CD4-positive, alpha-beta T cell (primary cell): ENCODE measurements at regions of chr9 and their contacts with region 1.

Region 1: GRCh38 chr9:92293452-92294296 is at the start of gene IARS1:
- DNase-seq: peak; percentile 97 to 100 (median 99)
- ATAC-seq: peak; percentile 93
- H3K4me3 ChIP-seq: peak within 1 kb of the TSS; percentile 70
- H3K4me3 Mint-ChIP-seq: peak within 1 kb of the TSS; percentile 98
- H3K27ac ChIP-seq: peak within 1 kb of the TSS; percentile 73 to 74
- H3K27ac Mint-ChIP-seq: peak within 1 kb of the TSS; percentile 97
- H3K4me1 ChIP-seq: peaks cover 25% of the 10 kb centered on the region
- H3K4me1 Mint-ChIP-seq: peaks cover 69% of the 10 kb centered on the region
- H3K27me3 ChIP-seq: no peaks in the 10 kb centered on the region
- H3K27me3 Mint-ChIP-seq: no peaks in the 10 kb centered on the region
- CTCF ChIP-seq: no peak
- total RNA-seq, gene IARS1: 49.8 to 56.8 TPM

Region 2: DNA sequence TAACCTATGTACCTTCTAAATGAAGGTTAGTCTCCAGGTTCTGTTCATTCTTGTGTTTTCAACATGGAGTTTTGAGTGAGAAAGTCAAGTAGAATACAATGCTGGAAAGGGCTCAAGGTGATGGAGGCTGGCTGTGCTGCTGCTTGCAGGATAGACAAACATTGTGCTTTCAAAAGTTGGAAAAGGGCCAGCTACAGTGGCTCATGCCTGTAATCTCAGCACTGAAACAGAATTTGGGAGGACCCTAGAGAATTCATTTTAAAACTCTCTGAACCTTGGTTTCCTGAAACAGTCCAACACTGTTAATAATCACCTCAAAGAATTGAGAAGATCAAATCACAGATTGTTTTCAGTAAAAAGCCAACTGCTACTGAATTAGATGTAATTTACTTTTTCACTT is 15.2 kb after region 1 on chr9:
- CTCF ChIA-PET with region 1: no interaction called
- POLR2A ChIA-PET with region 1: no interaction called
- intact Hi-C with region 1: no loop called
- DNase-seq: no peak
- ATAC-seq: no peak
- H3K4me3 ChIP-seq: no peak overlapping the region
- H3K4me3 Mint-ChIP-seq: no peak overlapping the region
- H3K27ac ChIP-seq: no peak overlapping the region
- H3K27ac Mint-ChIP-seq: no peak overlapping the region
- H3K4me1 ChIP-seq: no peaks in the 10 kb centered on the region
- H3K4me1 Mint-ChIP-seq: peaks cover 23% of the 10 kb centered on the region
- H3K27me3 ChIP-seq: no peaks in the 10 kb centered on the region
- H3K27me3 Mint-ChIP-seq: no peaks in the 10 kb centered on the region
- CTCF ChIP-seq: no peak

Region 3: GRCh38 chr9:92463984-92464383 is 170.3 kb after region 1 on chr9:
- CTCF ChIA-PET with region 1: no interaction called
- POLR2A ChIA-PET with region 1: no interaction called
- intact Hi-C with region 1: no loop called
- DNase-seq: no peak
- ATAC-seq: no peak
- H3K4me3 ChIP-seq: no peak overlapping the region
- H3K4me3 Mint-ChIP-seq: no peak overlapping the region
- H3K27ac ChIP-seq: no peak overlapping the region
- H3K27ac Mint-ChIP-seq: no peak overlapping the region
- H3K4me1 ChIP-seq: no peaks in the 10 kb centered on the region
- H3K4me1 Mint-ChIP-seq: no peaks in the 10 kb centered on the region
- H3K27me3 ChIP-seq: no peaks in the 10 kb centered on the region
- H3K27me3 Mint-ChIP-seq: no peaks in the 10 kb centered on the region
- CTCF ChIP-seq: no peak

Region 4: GRCh38 chr9:93950619-93951601 is 1657.2 kb after region 1 on chr9:
- CTCF ChIA-PET with region 1: no interaction called
- POLR2A ChIA-PET with region 1: no interaction called
- intact Hi-C with region 1: no loop called
- DNase-seq: peak in 1 of 14 experiments; percentile 9
- ATAC-seq: no peak
- H3K4me3 ChIP-seq: peak overlapping the region; percentile 59
- H3K4me3 Mint-ChIP-seq: peak overlapping the region; percentile 74
- H3K27ac ChIP-seq: no peak overlapping the region
- H3K27ac Mint-ChIP-seq: no peak overlapping the region
- H3K4me1 ChIP-seq: peaks cover 66% of the 10 kb centered on the region
- H3K4me1 Mint-ChIP-seq: peaks cover 47% of the 10 kb centered on the region
- H3K27me3 ChIP-seq: peaks cover 79 to 88% of the 10 kb centered on the region in 2 experiments
- H3K27me3 Mint-ChIP-seq: peaks cover 81% of the 10 kb centered on the region
- CTCF ChIP-seq: no peak

Region 5: DNA sequence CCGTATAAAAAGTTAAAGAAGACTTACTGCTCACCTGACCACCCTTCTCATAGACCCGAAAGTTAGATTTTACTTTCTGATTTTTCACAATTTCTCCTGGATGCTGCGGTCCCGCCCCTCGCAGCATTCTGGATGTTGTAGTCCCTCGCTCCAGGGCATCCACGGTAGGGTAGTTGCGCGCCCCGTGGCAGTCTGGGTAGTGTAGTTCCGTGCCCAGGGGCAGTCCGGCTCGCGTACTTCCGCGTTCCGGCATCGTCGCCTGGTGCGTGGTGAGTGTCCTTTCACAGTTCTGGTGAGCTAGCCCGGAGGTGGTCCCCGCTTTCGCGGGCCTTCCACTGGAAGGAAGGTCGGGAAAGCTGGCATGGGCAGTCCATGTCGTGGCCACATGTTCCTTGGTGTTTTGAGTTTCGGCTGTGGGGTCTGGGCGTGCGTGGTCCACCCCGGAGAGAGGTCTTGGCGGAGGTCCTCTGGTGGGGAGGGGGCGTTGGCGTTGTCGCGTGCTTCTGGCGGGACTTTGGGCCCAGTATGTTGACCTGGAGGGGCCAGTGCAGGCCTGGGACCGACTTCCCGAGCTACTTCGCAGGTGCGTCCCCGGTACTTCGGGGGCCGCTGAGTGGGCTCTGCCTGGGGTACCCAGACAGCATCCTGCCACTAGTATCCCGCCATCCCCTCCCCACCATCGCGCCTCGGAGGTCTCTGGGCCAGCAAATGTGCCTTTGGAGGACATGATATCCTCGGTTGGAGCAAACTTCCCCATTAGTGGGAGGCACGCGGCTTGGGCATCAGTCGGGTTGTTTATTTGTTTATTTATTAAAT is 1965.6 kb after region 1 on chr9 and contains the start of gene ZNF169:
- CTCF ChIA-PET with region 1: no interaction called
- POLR2A ChIA-PET with region 1: no interaction called
- intact Hi-C with region 1: loop called in 1 of 2 experiments (anchors 10 kb)
- DNase-seq: peak; percentile 74 to 91 (median 82)
- ATAC-seq: peak; percentile 100
- H3K4me3 ChIP-seq: peak within 1 kb of the TSS; percentile 98
- H3K4me3 Mint-ChIP-seq: peak within 1 kb of the TSS; percentile 98
- H3K27ac ChIP-seq: peak within 1 kb of the TSS; percentile 35 to 38
- H3K27ac Mint-ChIP-seq: peak within 1 kb of the TSS; percentile 88
- H3K4me1 ChIP-seq: peaks cover 21% of the 10 kb centered on the region
- H3K4me1 Mint-ChIP-seq: peaks cover 46% of the 10 kb centered on the region
- H3K27me3 ChIP-seq: peaks cover 0 to 6% of the 10 kb centered on the region in 2 experiments
- H3K27me3 Mint-ChIP-seq: peaks cover 5% of the 10 kb centered on the region
- CTCF ChIP-seq: no peak
- total RNA-seq, gene ZNF169: 3.5 to 5.1 TPM